Mucosa of descending colon (tissue), 3 donors: ENCODE measurements at regions of chr5 and their contacts with region 1.

Region 1: GRCh38 chr5:142151436-142152383 is 43.1 kb downstream of the NDFIP1 start:
- DNase-seq: peak in 1 of 3 donors; percentile 86
- ATAC-seq: peak; percentile 69
- H3K4me3 ChIP-seq: no peak overlapping the region
- H3K4me1 ChIP-seq: no peaks in the 10 kb centered on the region
- CTCF ChIP-seq: peak; percentile 52

Region 2: GRCh38 chr5:142548739-142549275 is 397.1 kb after region 1 on chr5:
- intact Hi-C with region 1: loop called (anchors 2 to 5 kb)
- DNase-seq: peak in 2 of 3 donors; percentile 27 to 75
- ATAC-seq: peak; percentile 97
- H3K4me3 ChIP-seq: no peak overlapping the region
- H3K4me1 ChIP-seq: no peaks in the 10 kb centered on the region
- CTCF ChIP-seq: peak; percentile 46